ENCODE measurements at regions of chr20 and their contacts with region 1.

Region 1: DNA sequence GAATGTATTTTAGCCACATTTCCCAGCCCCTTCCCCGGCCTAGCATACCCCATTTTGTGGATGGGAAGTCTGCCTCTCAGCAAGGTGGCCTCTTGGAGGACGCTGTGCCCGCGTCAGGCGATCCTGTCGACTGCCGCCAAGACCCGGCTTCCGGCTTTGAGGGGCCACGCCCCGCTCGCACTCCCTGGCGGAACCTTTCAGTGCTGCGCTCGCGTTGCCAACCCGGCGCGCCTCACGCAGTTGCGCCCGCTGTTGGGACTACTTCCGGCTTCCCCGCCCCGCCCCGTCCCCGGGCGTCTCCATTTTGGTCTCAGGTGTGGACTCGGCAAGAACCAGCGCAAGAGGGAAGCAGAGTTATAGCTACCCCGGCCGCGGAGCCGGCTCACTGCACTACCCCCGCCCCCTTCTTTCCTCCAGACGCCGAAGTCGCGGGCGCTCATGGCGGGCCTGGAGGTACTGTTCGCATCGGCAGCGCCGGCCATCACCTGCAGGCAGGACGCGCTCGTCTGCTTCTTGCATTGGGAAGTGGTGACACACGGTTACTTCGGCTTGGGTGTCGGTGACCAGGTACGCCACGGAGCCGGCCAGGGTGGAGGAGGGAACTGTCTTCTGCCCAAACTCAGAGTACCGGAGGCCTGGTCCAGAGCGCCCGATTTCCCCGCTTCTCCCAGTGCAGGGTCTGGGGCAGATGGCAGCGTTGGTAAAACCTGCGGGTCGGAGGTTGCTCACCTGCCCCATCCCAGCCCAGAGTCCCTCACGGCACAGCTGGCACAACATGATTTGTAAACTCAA is at the start of gene PSMF1:
- DNase-seq: peak; percentile 91 to 98 (median 96)
- ATAC-seq: peak; percentile 89
- H3K4me3 ChIP-seq: peak within 1 kb of the TSS; percentile 84 to 98
- H3K4me3 Mint-ChIP-seq: peak within 1 kb of the TSS; percentile 92
- H3K27ac ChIP-seq: peak within 1 kb of the TSS; percentile 71 to 87
- H3K27ac Mint-ChIP-seq: peak within 1 kb of the TSS; percentile 93
- H3K4me1 ChIP-seq: peaks cover 49% of the 10 kb centered on the region
- H3K4me1 Mint-ChIP-seq: peaks cover 61% of the 10 kb centered on the region
- H3K27me3 ChIP-seq: no peaks in the 10 kb centered on the region
- H3K27me3 Mint-ChIP-seq: no peaks in the 10 kb centered on the region
- CTCF ChIP-seq: no peak
- total RNA-seq, gene PSMF1: 86.4 to 87.8 TPM

Region 2: DNA sequence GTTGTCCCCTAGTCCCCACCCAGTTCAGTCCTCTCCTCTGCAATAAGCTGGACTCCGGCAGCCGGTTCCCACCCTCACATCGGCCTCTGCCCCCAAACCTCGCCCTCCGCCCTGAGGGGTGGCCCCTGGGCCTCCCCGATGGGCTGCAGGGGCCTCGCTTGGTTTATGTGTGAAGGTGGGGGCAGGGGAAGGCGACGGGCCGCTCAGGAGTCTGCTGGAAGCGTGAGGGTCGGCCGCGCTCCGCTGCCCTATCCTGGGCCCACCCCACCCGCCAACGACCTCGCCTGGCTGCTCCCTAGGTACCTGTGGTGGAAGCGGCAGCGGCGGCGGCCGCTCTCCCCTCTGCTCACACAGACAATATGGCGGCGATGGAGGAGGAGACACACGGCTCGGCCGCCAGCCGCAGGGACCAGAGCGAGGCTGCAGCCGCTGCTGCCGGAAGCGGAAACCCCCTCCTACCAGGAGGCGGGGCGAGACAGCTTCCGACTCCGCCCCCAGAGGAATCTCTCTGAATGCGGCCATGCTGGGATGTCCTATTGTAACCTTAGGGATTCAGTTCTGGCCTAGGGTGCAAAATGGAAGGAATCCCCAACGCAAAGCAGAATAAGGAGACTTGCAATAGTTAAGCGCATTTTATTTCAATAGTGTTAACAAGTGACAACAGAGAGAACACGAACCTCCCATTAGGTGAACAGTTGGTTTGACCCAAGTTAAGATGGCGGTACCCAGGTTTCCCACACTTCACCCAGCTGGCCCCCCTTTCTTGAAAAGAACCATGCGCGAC is 575.0 kb before region 1 on chr20 and contains the start of gene CSNK2A1:
- CTCF ChIA-PET with region 1: no interaction called
- POLR2A ChIA-PET with region 1: no interaction called
- intact Hi-C with region 1: loop called in 1 of 2 experiments (anchors 5 kb)
- DNase-seq: peak; percentile 95 to 99 (median 96)
- ATAC-seq: peak; percentile 90
- H3K4me3 ChIP-seq: peak within 1 kb of the TSS; percentile 36 to 98
- H3K4me3 Mint-ChIP-seq: peak within 1 kb of the TSS; percentile 96
- H3K27ac ChIP-seq: peak within 1 kb of the TSS; percentile 74 to 92
- H3K27ac Mint-ChIP-seq: peak within 1 kb of the TSS; percentile 100
- H3K4me1 ChIP-seq: peaks cover 27% of the 10 kb centered on the region
- H3K4me1 Mint-ChIP-seq: peaks cover 55% of the 10 kb centered on the region
- H3K27me3 ChIP-seq: no peaks in the 10 kb centered on the region
- H3K27me3 Mint-ChIP-seq: no peaks in the 10 kb centered on the region
- CTCF ChIP-seq: no peak
- total RNA-seq, gene CSNK2A1: 63.6 to 66.0 TPM

Region 3: DNA sequence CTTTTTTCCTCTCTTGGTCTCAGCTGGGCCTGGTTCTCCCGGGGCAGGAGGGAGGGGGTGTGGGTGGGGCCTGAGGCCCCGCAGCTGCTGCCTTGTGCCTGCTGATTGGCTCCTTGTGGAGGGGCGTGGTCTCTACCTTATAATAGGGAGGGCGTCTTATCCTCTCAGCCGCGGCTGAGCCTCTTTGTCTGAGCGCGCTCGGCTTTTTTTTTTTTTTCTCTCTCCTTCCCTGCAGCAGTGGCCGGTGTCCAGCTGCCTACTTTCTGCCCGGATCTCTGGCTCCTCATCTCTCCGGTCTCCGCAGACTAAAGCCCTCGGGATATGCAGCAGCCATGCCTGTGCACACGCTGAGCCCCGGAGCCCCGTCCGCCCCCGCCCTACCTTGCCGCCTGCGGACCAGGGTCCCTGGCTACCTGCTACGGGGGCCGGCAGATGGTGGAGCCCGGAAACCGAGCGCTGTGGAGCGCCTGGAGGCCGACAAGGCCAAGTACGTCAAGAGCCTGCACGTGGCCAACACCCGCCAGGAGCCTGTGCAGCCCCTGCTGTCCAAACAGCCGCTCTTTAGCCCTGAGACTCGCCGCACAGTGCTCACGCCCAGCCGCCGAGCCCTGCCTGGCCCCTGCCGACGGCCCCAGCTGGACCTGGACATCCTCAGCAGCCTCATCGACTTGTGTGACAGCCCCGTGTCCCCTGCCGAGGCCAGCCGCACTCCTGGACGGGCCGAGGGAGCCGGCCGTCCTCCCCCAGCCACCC is 273.9 kb before region 1 on chr20:
- CTCF ChIA-PET with region 1: no interaction called
- POLR2A ChIA-PET with region 1: no interaction called
- intact Hi-C with region 1: loop called in 1 of 2 experiments (anchors 2 kb)
- DNase-seq: peak; percentile 81 to 97 (median 90)
- ATAC-seq: peak; percentile 94
- H3K4me3 ChIP-seq: peak overlapping the region; percentile 65 to 71
- H3K4me3 Mint-ChIP-seq: peak overlapping the region; percentile 94
- H3K27ac ChIP-seq: peak overlapping the region; percentile 26 to 48
- H3K27ac Mint-ChIP-seq: peak overlapping the region; percentile 84
- H3K4me1 ChIP-seq: peaks cover 52% of the 10 kb centered on the region
- H3K4me1 Mint-ChIP-seq: peaks cover 54% of the 10 kb centered on the region
- H3K27me3 ChIP-seq: no peaks in the 10 kb centered on the region
- H3K27me3 Mint-ChIP-seq: no peaks in the 10 kb centered on the region
- CTCF ChIP-seq: no peak

Region 4: GRCh38 chr20:1005452-1006027 is 113.0 kb before region 1 on chr20:
- CTCF ChIA-PET with region 1: no interaction called
- POLR2A ChIA-PET with region 1: no interaction called
- intact Hi-C with region 1: no loop called
- DNase-seq: peak in 2 of 9 experiments; percentile 29
- ATAC-seq: peak; percentile 75
- H3K4me3 ChIP-seq: no peak overlapping the region
- H3K4me3 Mint-ChIP-seq: no peak overlapping the region
- H3K27ac ChIP-seq: no peak overlapping the region
- H3K27ac Mint-ChIP-seq: no peak overlapping the region
- H3K4me1 ChIP-seq: no peaks in the 10 kb centered on the region
- H3K4me1 Mint-ChIP-seq: peaks cover 7% of the 10 kb centered on the region
- H3K27me3 ChIP-seq: peaks cover 3 to 5% of the 10 kb centered on the region in 2 experiments
- H3K27me3 Mint-ChIP-seq: peaks cover 40% of the 10 kb centered on the region
- CTCF ChIP-seq: no peak

Region 5: GRCh38 chr20:1185316-1185761 is 66.8 kb after region 1 on chr20:
- CTCF ChIA-PET with region 1: no interaction called
- POLR2A ChIA-PET with region 1: no interaction called
- intact Hi-C with region 1: no loop called
- DNase-seq: peak in 1 of 9 experiments; percentile 6
- ATAC-seq: peak; percentile 14
- H3K4me3 ChIP-seq: no peak overlapping the region
- H3K4me3 Mint-ChIP-seq: no peak overlapping the region
- H3K27ac ChIP-seq: no peak overlapping the region
- H3K27ac Mint-ChIP-seq: no peak overlapping the region
- H3K4me1 ChIP-seq: no peaks in the 10 kb centered on the region
- H3K4me1 Mint-ChIP-seq: peaks cover 12% of the 10 kb centered on the region
- H3K27me3 ChIP-seq: peaks cover 3 to 9% of the 10 kb centered on the region in 2 experiments
- H3K27me3 Mint-ChIP-seq: peaks cover 21% of the 10 kb centered on the region
- CTCF ChIP-seq: no peak

Region 6: GRCh38 chr20:1212607-1213396 is 94.3 kb after region 1 on chr20:
- CTCF ChIA-PET with region 1: interaction called, 6 read pairs
- POLR2A ChIA-PET with region 1: no interaction called
- intact Hi-C with region 1: loop called in 1 of 2 experiments (anchors 5 kb)
- DNase-seq: peak; percentile 26 to 80 (median 68)
- ATAC-seq: peak; percentile 93
- H3K4me3 ChIP-seq: no peak overlapping the region
- H3K4me3 Mint-ChIP-seq: no peak overlapping the region
- H3K27ac ChIP-seq: no peak overlapping the region
- H3K27ac Mint-ChIP-seq: no peak overlapping the region
- H3K4me1 ChIP-seq: peaks cover 24% of the 10 kb centered on the region
- H3K4me1 Mint-ChIP-seq: peaks cover 34% of the 10 kb centered on the region
- H3K27me3 ChIP-seq: no peaks in the 10 kb centered on the region
- H3K27me3 Mint-ChIP-seq: peaks cover 8% of the 10 kb centered on the region
- CTCF ChIP-seq: peak; percentile 88

Region 7: GRCh38 chr20:1266167-1266973 is 147.8 kb after region 1 on chr20 and contains the start of gene SNPH:
- CTCF ChIA-PET with region 1: no interaction called
- POLR2A ChIA-PET with region 1: no interaction called
- intact Hi-C with region 1: loop called in 1 of 2 experiments (anchors 1 kb)
- DNase-seq: peak; percentile 51 to 89 (median 79)
- ATAC-seq: peak; percentile 85
- H3K4me3 ChIP-seq: peak within 1 kb of the TSS; percentile 51 to 56
- H3K4me3 Mint-ChIP-seq: peak within 1 kb of the TSS; percentile 86
- H3K27ac ChIP-seq: peak within 1 kb of the TSS; percentile 43 to 80
- H3K27ac Mint-ChIP-seq: peak within 1 kb of the TSS; percentile 95
- H3K4me1 ChIP-seq: peaks cover 52% of the 10 kb centered on the region
- H3K4me1 Mint-ChIP-seq: peaks cover 75% of the 10 kb centered on the region
- H3K27me3 ChIP-seq: no peaks in the 10 kb centered on the region
- H3K27me3 Mint-ChIP-seq: no peaks in the 10 kb centered on the region
- CTCF ChIP-seq: no peak
- total RNA-seq, gene SNPH: 13.6 to 14.4 TPM

Region 8: DNA sequence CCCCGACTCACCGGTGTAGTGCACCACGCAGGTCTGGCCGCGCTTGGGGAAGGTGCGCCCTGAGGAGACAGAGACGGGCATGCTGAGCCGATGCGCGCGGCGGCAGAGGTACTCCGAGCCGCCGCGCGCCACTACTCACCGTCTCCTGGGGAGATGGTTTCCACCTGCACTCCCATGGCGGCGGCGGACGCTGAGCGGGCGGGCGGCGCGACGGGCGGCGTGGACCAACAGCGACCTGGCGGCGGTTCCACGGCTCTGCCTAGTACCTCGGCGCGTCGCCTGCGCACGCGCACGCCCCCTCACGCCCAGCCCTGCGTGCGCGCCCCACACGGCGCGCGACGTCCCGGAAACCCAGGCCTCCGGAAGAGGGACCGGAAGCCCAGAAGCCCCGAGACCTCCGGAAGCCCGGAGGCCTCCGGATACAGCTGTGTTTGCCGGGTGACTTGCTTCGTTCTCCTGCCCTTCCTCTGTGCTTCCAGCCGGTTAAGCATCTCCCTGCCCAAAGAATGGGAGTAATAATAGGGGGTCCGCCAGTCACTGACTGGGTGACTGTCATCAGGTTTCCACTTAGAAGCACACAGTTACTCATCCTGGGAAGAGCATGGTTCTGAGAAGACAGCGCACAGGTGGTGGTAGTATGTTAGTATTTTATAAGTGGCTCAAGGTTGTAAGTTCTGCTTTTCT is 274.4 kb after region 1 on chr20 and contains the start of gene FKBP1A:
- CTCF ChIA-PET with region 1: no interaction called
- POLR2A ChIA-PET with region 1: no interaction called
- intact Hi-C with region 1: loop called in 1 of 2 experiments (anchors 1 kb)
- DNase-seq: peak; percentile 85 to 97 (median 92)
- ATAC-seq: peak; percentile 84
- H3K4me3 ChIP-seq: peak within 1 kb of the TSS; percentile 62 to 73
- H3K4me3 Mint-ChIP-seq: peak within 1 kb of the TSS; percentile 94
- H3K27ac ChIP-seq: peak within 1 kb of the TSS; percentile 58 to 68
- H3K27ac Mint-ChIP-seq: peak within 1 kb of the TSS; percentile 96
- H3K4me1 ChIP-seq: peaks cover 47% of the 10 kb centered on the region
- H3K4me1 Mint-ChIP-seq: peaks cover 53% of the 10 kb centered on the region
- H3K27me3 ChIP-seq: no peaks in the 10 kb centered on the region
- H3K27me3 Mint-ChIP-seq: no peaks in the 10 kb centered on the region
- CTCF ChIP-seq: no peak
- total RNA-seq, gene FKBP1A: 34.0 to 36.8 TPM

Region 9: GRCh38 chr20:2470423-2471193 is 1352.1 kb after region 1 on chr20 and contains the start of gene SNRPB:
- CTCF ChIA-PET with region 1: no interaction called
- POLR2A ChIA-PET with region 1: no interaction called
- intact Hi-C with region 1: loop called (anchors 1 to 5 kb)
- DNase-seq: peak; percentile 93 to 99 (median 97)
- ATAC-seq: peak; percentile 93
- H3K4me3 ChIP-seq: peak within 1 kb of the TSS; percentile 76 to 99
- H3K4me3 Mint-ChIP-seq: peak within 1 kb of the TSS; percentile 99
- H3K27ac ChIP-seq: peak within 1 kb of the TSS; percentile 95 to 99
- H3K27ac Mint-ChIP-seq: peak within 1 kb of the TSS; percentile 98
- H3K4me1 ChIP-seq: peaks cover 21% of the 10 kb centered on the region
- H3K4me1 Mint-ChIP-seq: peaks cover 44% of the 10 kb centered on the region
- H3K27me3 ChIP-seq: no peaks in the 10 kb centered on the region
- H3K27me3 Mint-ChIP-seq: no peaks in the 10 kb centered on the region
- CTCF ChIP-seq: no peak
- total RNA-seq, gene SNRPB: 176 to 180 TPM

Measured in CD8-positive, alpha-beta T cell (primary cell).